ENCODE measurements at regions of chr4 and their contacts with region 1.

Region 1: GRCh38 chr4:176377780-176378179 is 58.0 kb downstream of the SPCS3 start:
- DNase-seq: peak in 1 of 2 donors; percentile 20
- H3K4me3 ChIP-seq: no peak overlapping the region
- H3K27ac ChIP-seq: no peak overlapping the region
- H3K4me1 ChIP-seq: no peaks in the 10 kb centered on the region
- H3K27me3 ChIP-seq: no peaks in the 10 kb centered on the region
- CTCF ChIP-seq: peak in 1 of 7 experiments; percentile 20
- EP300 ChIP-seq: no peak
- POLR2A ChIP-seq: no peak

Region 2: GRCh38 chr4:177047070-177047850 is 669.5 kb after region 1 on chr4:
- intact Hi-C with region 1: loop called (anchors 10 kb)
- DNase-seq: peak; percentile 49 to 84
- H3K4me3 ChIP-seq: no peak overlapping the region
- H3K27ac ChIP-seq: no peak overlapping the region
- H3K4me1 ChIP-seq: peaks cover 0 to 5% (median 2%) of the 10 kb centered on the region in 4 donors
- H3K27me3 ChIP-seq: no peaks in the 10 kb centered on the region
- CTCF ChIP-seq: peak in 4 of 7 experiments; percentile 51 to 77 (median 66)
- EP300 ChIP-seq: no peak
- POLR2A ChIP-seq: no peak

Measured in stomach (tissue), 19 donors.